ENCODE measurements at regions of chr3 and their contacts with region 1.

Region 1: GRCh38 chr3:32296256-32297204 is 58.0 kb downstream of the CMTM8 start:
- DNase-seq: peak; percentile 76
- H3K4me3 Mint-ChIP-seq: peak overlapping the region; percentile 44
- H3K27ac Mint-ChIP-seq: peak overlapping the region; percentile 63
- H3K4me1 Mint-ChIP-seq: peaks cover 39% of the 10 kb centered on the region
- H3K27me3 Mint-ChIP-seq: no peaks in the 10 kb centered on the region

Region 2: DNA sequence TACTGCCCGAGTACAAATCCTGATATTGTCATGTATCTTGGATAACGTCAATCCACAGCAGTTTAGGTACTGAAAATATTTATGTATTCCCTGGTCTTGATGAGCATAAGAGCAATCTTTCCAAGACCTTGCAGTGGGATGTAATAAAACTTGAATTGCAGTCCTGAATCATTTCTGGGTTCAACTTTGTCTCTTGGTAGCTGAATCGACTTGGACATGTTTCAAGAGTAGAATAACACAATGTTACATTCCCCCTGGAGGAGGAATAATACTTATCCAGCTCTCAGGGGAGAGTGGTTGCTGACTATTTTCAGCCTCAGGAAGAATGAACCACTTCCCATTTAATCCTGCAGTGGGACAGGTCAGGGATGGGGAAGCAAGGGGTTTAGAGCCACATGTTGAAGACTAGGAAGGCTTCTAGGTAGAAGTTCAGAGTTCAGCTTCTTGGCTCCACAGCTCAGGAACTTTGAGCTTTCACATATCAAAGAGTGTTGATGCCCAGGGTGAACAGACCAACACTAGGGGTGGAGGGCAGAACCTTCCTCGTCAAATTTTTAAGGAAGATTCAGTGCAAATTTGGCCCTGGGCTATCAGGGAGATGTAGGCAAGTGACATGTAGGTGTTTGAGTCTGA is 233.5 kb before region 1 on chr3:
- CTCF ChIA-PET with region 1: no interaction called
- POLR2A ChIA-PET with region 1: no interaction called
- intact Hi-C with region 1: no loop called
- DNase-seq: no peak
- H3K4me3 Mint-ChIP-seq: no peak overlapping the region
- H3K27ac Mint-ChIP-seq: no peak overlapping the region
- H3K4me1 Mint-ChIP-seq: no peaks in the 10 kb centered on the region
- H3K27me3 Mint-ChIP-seq: no peaks in the 10 kb centered on the region

Region 3: DNA sequence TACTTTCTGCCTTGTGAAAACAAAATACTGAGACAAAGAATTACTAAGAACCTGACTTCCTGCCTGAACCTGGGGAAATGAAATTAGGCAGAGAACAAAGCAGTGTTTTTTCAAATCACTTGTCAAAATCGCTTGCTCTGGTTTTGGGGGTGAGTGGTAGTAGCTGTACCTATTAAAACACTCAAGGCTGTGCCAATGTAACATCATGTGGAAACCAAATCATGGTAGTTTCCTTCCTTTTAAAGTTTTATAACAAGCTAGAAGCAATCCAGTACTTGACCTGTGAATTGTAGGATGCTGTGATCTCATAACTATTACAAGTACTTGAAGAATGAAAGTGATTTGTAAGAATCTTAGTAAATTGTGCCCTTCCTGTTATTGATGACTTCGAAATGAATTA is 51.3 kb before region 1 on chr3:
- CTCF ChIA-PET with region 1: interaction called, 36 read pairs
- POLR2A ChIA-PET with region 1: no interaction called
- intact Hi-C with region 1: loop called (anchors 2 kb)
- DNase-seq: no peak
- H3K4me3 Mint-ChIP-seq: no peak overlapping the region
- H3K27ac Mint-ChIP-seq: peak overlapping the region; percentile 4
- H3K4me1 Mint-ChIP-seq: peaks cover 59% of the 10 kb centered on the region
- H3K27me3 Mint-ChIP-seq: no peaks in the 10 kb centered on the region

Region 4: GRCh38 chr3:32313723-32314473 is 17.4 kb after region 1 on chr3:
- CTCF ChIA-PET with region 1: interaction called, 12 read pairs
- POLR2A ChIA-PET with region 1: interaction called, 3 read pairs
- intact Hi-C with region 1: loop called (anchors 1 kb)
- DNase-seq: peak; percentile 49
- H3K4me3 Mint-ChIP-seq: peak overlapping the region; percentile 77
- H3K27ac Mint-ChIP-seq: peak overlapping the region; percentile 84
- H3K4me1 Mint-ChIP-seq: peaks cover 38% of the 10 kb centered on the region
- H3K27me3 Mint-ChIP-seq: no peaks in the 10 kb centered on the region

Region 5: GRCh38 chr3:32340039-32340438 is 43.5 kb after region 1 on chr3:
- CTCF ChIA-PET with region 1: interaction called, 89 read pairs
- POLR2A ChIA-PET with region 1: no interaction called
- intact Hi-C with region 1: no loop called
- DNase-seq: peak; percentile 29
- H3K4me3 Mint-ChIP-seq: no peak overlapping the region
- H3K27ac Mint-ChIP-seq: no peak overlapping the region
- H3K4me1 Mint-ChIP-seq: peaks cover 24% of the 10 kb centered on the region
- H3K27me3 Mint-ChIP-seq: no peaks in the 10 kb centered on the region

Region 6: GRCh38 chr3:32401556-32402081 is 105.1 kb after region 1 on chr3:
- CTCF ChIA-PET with region 1: interaction called, 4 read pairs
- POLR2A ChIA-PET with region 1: interaction called, 4 read pairs
- intact Hi-C with region 1: loop called (anchors 2 kb)
- DNase-seq: peak; percentile 74
- H3K4me3 Mint-ChIP-seq: peak overlapping the region; percentile 85
- H3K27ac Mint-ChIP-seq: peak overlapping the region; percentile 99
- H3K4me1 Mint-ChIP-seq: peaks cover 58% of the 10 kb centered on the region
- H3K27me3 Mint-ChIP-seq: no peaks in the 10 kb centered on the region

Region 7: DNA sequence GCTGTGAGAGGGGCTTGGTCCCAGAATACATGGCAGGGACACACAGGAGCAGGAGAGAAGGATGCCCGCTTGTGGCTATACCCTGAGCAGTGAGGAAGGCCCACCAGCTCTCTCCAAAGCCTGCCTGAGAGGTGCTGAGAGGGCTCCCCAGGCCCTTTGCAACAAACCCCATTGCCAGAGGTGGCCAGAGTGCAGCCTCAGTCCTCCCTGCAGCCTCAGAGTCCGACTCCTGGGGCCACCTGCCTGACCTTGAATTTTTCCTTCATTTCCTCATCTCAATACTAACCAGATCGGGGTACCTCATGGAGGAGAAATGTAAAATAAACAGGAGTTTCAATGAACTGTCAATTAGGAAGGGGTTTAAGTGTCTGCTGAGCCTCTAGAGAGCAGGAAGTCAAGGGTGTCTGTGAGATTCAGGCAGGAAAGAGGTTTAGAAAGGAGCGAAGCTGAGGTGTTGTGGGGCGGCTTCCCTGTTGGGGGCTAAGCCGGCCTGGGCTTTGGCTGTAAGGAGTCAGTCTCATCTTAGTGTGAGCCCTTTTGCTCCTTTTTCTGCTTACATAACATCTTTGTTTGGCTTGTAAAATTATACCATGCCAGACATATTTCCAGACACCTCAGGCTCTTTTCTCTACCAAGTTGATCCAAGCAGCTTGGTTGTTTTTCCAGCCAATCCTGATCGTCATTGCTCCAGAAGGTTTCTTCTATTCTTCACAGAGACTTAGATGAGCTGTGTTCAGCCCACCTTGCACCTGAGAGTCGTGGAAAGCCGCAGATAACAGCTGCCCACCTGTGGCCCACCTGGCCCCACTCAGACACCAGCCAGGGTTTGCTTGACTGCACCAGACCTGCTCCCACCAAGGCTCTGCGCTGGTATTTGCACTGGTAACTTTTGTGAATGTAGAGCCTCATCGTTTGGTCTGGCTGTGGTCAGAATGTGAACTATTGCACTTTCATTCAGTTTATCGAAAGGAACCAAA is 131.8 kb after region 1 on chr3:
- CTCF ChIA-PET with region 1: no interaction called
- POLR2A ChIA-PET with region 1: no interaction called
- intact Hi-C with region 1: no loop called
- DNase-seq: peak; percentile 41
- H3K4me3 Mint-ChIP-seq: peak overlapping the region; percentile 57
- H3K27ac Mint-ChIP-seq: peak overlapping the region; percentile 84
- H3K4me1 Mint-ChIP-seq: peaks cover 93% of the 10 kb centered on the region
- H3K27me3 Mint-ChIP-seq: no peaks in the 10 kb centered on the region

Measured in activated CD4-positive, alpha-beta memory T cell treated with anti-CD3 and anti-CD28 coated beads for 36 hours (primary cell).